Head of caudate nucleus (tissue), 42 donors: ENCODE measurements at regions of chr15 and their contacts with region 1.

Region 1: DNA sequence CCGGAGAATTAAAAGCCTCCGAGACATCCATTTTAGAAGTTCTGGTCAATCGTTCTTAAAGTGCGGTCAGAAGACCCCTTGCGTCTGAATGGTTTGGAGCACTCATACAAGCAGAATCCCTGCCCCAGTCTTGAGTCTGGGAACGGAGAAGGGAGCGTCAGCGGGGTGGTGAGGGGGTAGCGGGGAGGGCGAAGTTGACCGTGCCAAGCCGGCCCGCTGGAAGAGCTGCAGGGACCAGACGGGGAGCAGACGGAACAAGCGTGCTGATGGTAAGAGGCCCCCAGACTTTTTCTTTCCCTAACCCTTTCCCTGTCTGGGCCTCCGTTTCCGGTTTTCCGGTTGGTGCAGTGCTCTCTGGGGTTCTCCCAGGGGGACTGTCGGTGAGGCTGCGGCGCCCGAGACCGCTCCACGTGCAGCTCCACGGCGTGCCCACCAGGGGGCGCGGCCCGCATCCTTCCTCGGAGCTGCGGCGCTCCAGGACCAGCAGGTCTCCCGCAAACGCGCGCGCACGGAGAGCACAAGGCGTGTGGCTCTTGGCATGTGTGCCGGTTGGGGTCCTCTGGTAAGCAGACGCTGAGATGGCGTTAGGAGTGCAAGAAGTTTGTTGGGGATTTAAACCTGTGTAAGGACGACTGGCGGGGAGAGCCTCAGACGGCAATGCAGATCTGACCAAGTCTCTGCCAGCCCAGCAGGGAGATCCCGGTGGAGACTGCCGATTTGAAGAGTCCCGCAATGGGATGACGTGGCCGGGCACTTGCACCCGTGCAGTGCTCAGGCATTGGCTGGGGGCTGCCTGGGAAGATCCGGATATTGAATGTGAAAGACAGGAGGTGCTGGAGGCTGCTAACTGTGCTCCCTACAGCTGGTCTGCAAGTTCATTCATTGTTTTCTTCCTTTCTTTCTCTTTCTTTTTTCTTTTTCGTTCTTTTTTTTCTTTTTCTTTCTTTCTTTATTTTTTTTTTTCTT is 19.2 kb upstream of the CORO2B start:
- DNase-seq: peak; percentile 72 to 94 (median 86)

Region 2: DNA sequence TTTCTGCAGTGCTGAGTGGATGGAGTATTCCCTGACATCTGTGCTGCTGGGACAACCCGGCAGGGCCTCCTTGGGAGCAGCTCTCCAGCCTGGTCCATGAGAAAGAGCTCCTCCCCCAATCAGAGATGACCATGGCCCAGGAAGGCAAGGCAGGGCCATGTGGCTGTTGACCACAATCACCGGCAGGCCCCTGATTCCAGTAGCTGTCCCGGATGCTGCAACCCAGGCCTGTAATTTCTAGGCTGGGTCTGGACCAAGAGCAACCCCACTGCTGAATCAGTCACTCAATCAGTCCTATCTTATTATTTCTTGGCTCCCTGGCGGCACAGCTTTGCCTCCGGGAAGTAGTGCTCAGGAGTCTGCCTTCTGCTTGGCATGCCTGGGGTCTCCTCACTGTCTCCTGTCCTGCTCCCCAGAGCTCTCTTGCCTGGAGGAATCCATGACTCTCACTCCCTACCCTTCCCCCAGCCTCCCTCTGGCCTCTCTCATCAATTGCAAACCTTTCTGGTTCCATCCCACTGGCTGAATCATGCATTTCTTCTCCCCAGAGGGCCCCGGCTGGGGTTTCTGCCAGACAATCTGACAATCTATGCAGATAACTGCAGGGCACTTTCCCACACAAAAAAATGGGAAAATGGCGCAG is 95.1 kb before region 1 on chr15:
- intact Hi-C with region 1: no loop called
- DNase-seq: no peak

Region 3: DNA sequence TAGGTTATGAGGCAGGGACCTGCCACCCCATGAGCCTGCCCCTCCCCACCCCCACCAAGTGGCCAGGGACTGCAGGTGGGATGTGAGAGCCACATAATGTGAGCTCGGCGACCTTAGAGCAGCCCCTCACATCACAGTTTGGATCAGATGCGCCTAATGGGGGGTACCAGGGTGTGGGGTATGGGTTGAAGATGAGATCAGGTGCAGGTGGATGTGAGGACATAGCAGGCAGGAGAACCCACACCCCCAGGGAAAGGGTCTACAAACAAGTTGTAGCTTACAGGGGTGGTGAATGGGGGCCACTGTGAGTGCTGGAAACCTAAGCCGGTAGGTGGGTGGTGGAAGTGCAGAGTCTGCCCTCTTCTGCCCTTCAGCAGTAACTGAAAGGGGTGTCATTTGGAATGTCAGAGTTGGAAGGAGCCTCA is 113.2 kb after region 1 on chr15:
- intact Hi-C with region 1: loop called (anchors 2 kb)
- DNase-seq: peak in 17 of 42 donors; percentile 12 to 63 (median 42)